ENCODE measurements at regions of chr9 and their contacts with region 1.

Region 1: GRCh38 chr9:85610074-85610860 is 131.5 kb downstream of the AGTPBP1 start:
- DNase-seq: peak; percentile 53
- H3K4me3 ChIP-seq: peak overlapping the region in 2 of 3 experiments; percentile 29 to 31
- H3K27ac ChIP-seq: no peak overlapping the region
- H3K4me1 ChIP-seq: no peaks in the 10 kb centered on the region
- H3K27me3 ChIP-seq: no peaks in the 10 kb centered on the region
- CTCF ChIP-seq: peak; percentile 75 to 81

Region 2: DNA sequence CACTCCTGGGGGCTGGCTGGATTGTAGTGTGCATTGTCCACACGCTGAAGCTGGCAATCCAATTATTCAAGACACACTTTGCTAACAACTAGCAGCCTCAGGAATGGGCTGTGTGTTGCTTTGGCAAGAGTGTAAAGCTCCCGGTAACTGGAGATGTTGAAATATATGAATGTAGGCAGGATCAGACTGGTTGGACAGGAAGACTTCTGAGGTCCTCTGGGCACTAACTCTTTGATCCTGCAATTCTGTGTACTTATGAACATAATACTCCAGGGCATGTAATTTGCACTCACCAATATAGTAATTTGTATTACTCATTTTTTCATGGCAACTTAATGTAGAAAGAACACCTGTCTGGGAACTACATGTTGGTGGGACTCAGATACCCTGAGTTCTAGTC is 1163.0 kb before region 1 on chr9:
- CTCF ChIA-PET with region 1: interaction called, 20 read pairs
- dilution Hi-C with region 1: no loop called
- in situ Hi-C with region 1: no loop called
- intact Hi-C with region 1: no loop called
- DNase-seq: peak; percentile 29
- H3K4me3 ChIP-seq: no peak overlapping the region
- H3K27ac ChIP-seq: no peak overlapping the region
- H3K4me1 ChIP-seq: no peaks in the 10 kb centered on the region
- H3K27me3 ChIP-seq: no peaks in the 10 kb centered on the region
- CTCF ChIP-seq: no peak

Region 3: GRCh38 chr9:85332487-85332886 is 277.8 kb before region 1 on chr9:
- CTCF ChIA-PET with region 1: interaction called, 18 read pairs
- dilution Hi-C with region 1: no loop called
- in situ Hi-C with region 1: no loop called
- intact Hi-C with region 1: no loop called
- DNase-seq: no peak
- H3K4me3 ChIP-seq: no peak overlapping the region
- H3K27ac ChIP-seq: no peak overlapping the region
- H3K4me1 ChIP-seq: no peaks in the 10 kb centered on the region
- H3K27me3 ChIP-seq: peaks cover 1% of the 10 kb centered on the region
- CTCF ChIP-seq: peak in 1 of 2 donors; percentile 13

Region 4: GRCh38 chr9:85425153-85425611 is 185.1 kb before region 1 on chr9:
- CTCF ChIA-PET with region 1: interaction called, 3 read pairs
- dilution Hi-C with region 1: no loop called
- in situ Hi-C with region 1: no loop called
- intact Hi-C with region 1: loop called (anchors 2 kb)
- DNase-seq: peak; percentile 27
- H3K4me3 ChIP-seq: no peak overlapping the region
- H3K27ac ChIP-seq: no peak overlapping the region
- H3K4me1 ChIP-seq: no peaks in the 10 kb centered on the region
- H3K27me3 ChIP-seq: no peaks in the 10 kb centered on the region
- CTCF ChIP-seq: peak; percentile 62 to 79

Region 5: DNA sequence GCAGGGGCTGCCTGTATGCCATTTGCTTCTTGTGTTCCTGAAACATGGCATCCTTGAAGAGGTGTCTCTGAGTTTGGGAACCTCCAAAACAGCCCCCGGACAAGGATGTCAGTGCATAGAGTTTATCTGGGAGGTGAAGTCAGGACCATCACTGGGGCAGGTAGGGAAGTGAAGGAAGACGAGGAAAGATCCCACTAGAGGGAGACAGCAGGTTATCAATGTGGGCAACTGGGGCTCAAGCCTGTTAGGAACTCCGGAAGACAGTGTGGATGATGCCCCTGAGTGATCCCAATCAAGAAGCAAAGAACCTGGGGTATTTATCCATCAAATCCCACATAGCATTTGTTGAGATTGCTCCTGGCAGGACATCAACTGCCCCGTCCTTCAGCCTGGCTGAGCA is 101.7 kb before region 1 on chr9:
- CTCF ChIA-PET with region 1: interaction called, 5 read pairs
- dilution Hi-C with region 1: no loop called
- in situ Hi-C with region 1: loop called in 1 of 2 experiments (anchors 25 kb)
- intact Hi-C with region 1: loop called (anchors 1 kb)
- DNase-seq: no peak
- H3K4me3 ChIP-seq: no peak overlapping the region
- H3K27ac ChIP-seq: no peak overlapping the region
- H3K4me1 ChIP-seq: no peaks in the 10 kb centered on the region
- H3K27me3 ChIP-seq: no peaks in the 10 kb centered on the region
- CTCF ChIP-seq: peak; percentile 23 to 54

Region 6: GRCh38 chr9:85522459-85523092 is 87.7 kb before region 1 on chr9:
- CTCF ChIA-PET with region 1: no interaction called
- dilution Hi-C with region 1: no loop called
- in situ Hi-C with region 1: loop called in 1 of 2 experiments (anchors 25 kb)
- intact Hi-C with region 1: no loop called
- DNase-seq: peak; percentile 31
- H3K4me3 ChIP-seq: peak overlapping the region; percentile 36 to 45 (median 43)
- H3K27ac ChIP-seq: no peak overlapping the region
- H3K4me1 ChIP-seq: peaks cover 7% of the 10 kb centered on the region
- H3K27me3 ChIP-seq: peaks cover 12% of the 10 kb centered on the region
- CTCF ChIP-seq: no peak

Region 7: GRCh38 chr9:85577353-85577952 is 32.8 kb before region 1 on chr9:
- CTCF ChIA-PET with region 1: interaction called, 17 read pairs
- dilution Hi-C with region 1: no loop called
- in situ Hi-C with region 1: no loop called
- intact Hi-C with region 1: no loop called
- DNase-seq: no peak
- H3K4me3 ChIP-seq: no peak overlapping the region
- H3K27ac ChIP-seq: no peak overlapping the region
- H3K4me1 ChIP-seq: no peaks in the 10 kb centered on the region
- H3K27me3 ChIP-seq: no peaks in the 10 kb centered on the region
- CTCF ChIP-seq: no peak

Region 8: DNA sequence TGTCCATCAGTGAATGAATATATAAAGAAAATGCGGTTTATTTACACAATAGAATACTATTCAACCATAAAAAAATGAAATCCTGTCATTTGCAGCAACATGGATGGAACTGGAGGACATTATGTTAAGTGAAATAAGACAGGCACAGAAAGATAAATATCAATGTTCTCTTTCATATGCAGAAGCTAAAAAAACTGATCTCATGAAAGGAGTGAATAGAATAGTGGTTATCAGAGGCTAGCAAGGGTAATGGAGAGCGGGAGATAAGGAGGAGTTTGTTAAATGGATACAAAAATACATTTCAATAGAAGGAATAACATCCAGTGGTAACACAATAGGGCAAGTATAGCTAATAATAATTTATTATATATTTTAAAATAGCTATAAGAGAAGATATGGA is 66.5 kb after region 1 on chr9:
- CTCF ChIA-PET with region 1: no interaction called
- dilution Hi-C with region 1: no loop called
- in situ Hi-C with region 1: no loop called
- intact Hi-C with region 1: no loop called
- DNase-seq: no peak
- H3K4me3 ChIP-seq: no peak overlapping the region
- H3K27ac ChIP-seq: no peak overlapping the region
- H3K4me1 ChIP-seq: no peaks in the 10 kb centered on the region
- H3K27me3 ChIP-seq: no peaks in the 10 kb centered on the region
- CTCF ChIP-seq: no peak

Measured in mammary epithelial cell (primary cell).